ENCODE measurements at regions of chr16 and their contacts with region 1.

Region 1: DNA sequence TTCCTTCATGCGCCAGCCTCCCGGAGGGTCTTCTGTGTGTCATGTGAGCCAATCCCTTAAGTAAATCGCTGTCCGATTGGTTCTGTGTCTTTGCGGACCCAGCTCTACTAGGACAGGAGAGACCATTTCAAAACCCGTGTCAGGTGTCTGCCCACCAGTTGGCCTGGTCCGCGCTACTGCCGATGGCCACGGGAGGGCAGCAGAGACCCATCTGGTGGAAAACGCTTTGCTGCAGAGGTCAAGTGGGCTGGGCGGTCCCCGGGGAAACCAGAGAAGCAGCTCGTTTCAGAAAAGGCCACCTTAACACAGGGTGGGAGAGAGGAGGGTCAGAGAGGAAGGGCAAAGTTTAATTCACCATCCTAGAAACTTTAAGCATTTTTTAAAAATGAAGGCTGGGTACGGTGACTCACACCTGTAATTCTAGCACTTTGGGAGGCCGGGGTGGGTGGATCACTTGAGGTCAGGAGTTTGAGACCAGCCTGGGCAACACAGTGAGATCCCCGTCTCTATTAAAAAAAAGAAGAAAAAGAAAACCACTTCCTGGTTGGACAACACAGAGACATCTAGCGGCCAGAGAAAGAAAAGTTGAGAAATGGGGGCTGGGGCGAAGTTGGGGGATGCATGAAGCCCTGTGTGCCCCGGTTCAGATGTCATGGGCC is 2.8 kb upstream of the CIBAR2 start:
- DNase-seq: peak; percentile 92
- ATAC-seq: peak; percentile 97
- H3K4me3 Mint-ChIP-seq: peak overlapping the region; percentile 53
- H3K27ac Mint-ChIP-seq: peak overlapping the region; percentile 90
- H3K4me1 Mint-ChIP-seq: peaks cover 11% of the 10 kb centered on the region
- H3K27me3 Mint-ChIP-seq: no peaks in the 10 kb centered on the region
- CTCF ChIP-seq: peak; percentile 94

Region 2: GRCh38 chr16:85104821-85105391 is 10.1 kb before region 1 on chr16:
- CTCF ChIA-PET with region 1: interaction called, 48 read pairs
- POLR2A ChIA-PET with region 1: interaction called, 4 read pairs
- intact Hi-C with region 1: no loop called
- DNase-seq: peak; percentile 28
- ATAC-seq: peak; percentile 82
- H3K4me3 Mint-ChIP-seq: no peak overlapping the region
- H3K27ac Mint-ChIP-seq: peak overlapping the region; percentile 87
- H3K4me1 Mint-ChIP-seq: peaks cover 33% of the 10 kb centered on the region
- H3K27me3 Mint-ChIP-seq: no peaks in the 10 kb centered on the region
- CTCF ChIP-seq: no peak

Region 3: DNA sequence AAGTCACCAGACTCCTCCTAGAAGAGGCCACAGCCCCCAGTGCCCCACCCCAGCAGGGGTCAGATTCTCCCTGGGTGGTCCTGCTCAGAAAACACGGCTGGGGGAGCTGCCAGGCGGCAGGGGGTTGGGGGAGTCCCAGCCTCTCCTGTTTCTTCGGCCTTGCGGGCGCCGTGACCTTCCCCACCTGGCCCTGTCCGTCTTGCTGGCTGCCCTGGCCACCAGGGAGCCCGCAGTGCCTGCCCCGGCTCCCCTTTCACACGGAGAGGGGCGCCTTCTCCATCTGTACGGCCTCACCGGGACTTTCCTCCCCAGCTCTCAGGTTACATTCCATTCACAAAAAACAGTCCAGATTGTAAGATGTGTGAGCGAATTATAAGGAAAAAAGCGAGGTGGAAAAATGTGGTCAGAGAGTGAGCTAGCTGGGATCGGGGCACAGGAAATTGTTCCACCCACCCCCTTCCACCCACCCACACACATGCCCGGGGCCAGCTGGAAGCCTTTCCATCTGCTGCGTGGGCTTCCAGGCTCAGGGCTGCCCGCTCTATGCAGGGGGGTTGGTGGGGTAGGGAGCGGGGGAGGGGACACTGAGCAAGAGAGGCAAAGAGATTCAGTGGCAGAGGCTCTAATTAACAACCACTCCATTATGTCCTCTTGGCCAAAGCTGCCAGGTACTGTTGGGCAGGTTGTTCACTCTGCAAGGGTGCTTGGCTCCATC is 11.8 kb after region 1 on chr16:
- CTCF ChIA-PET with region 1: interaction called, 11 read pairs
- POLR2A ChIA-PET with region 1: interaction called, 4 read pairs
- intact Hi-C with region 1: no loop called
- DNase-seq: peak; percentile 48
- ATAC-seq: peak; percentile 47
- H3K4me3 Mint-ChIP-seq: no peak overlapping the region
- H3K27ac Mint-ChIP-seq: peak overlapping the region; percentile 53
- H3K4me1 Mint-ChIP-seq: peaks cover 12% of the 10 kb centered on the region
- H3K27me3 Mint-ChIP-seq: no peaks in the 10 kb centered on the region
- CTCF ChIP-seq: no peak

Region 4: GRCh38 chr16:85253084-85253941 is 138.3 kb after region 1 on chr16:
- CTCF ChIA-PET with region 1: interaction called, 10 read pairs
- POLR2A ChIA-PET with region 1: no interaction called
- intact Hi-C with region 1: no loop called
- DNase-seq: peak; percentile 72
- ATAC-seq: peak; percentile 88
- H3K4me3 Mint-ChIP-seq: no peak overlapping the region
- H3K27ac Mint-ChIP-seq: no peak overlapping the region
- H3K4me1 Mint-ChIP-seq: peaks cover 10% of the 10 kb centered on the region
- H3K27me3 Mint-ChIP-seq: peaks cover 4% of the 10 kb centered on the region
- CTCF ChIP-seq: peak; percentile 98